ENCODE measurements at regions of chr2 and their contacts with region 1.

Region 1: GRCh38 chr2:72862239-72862988 is 24.8 kb upstream of the SPR start:
- DNase-seq: peak; percentile 77
- ATAC-seq: peak; percentile 89
- H3K4me3 Mint-ChIP-seq: peak overlapping the region; percentile 42
- H3K27ac Mint-ChIP-seq: no peak overlapping the region
- H3K4me1 Mint-ChIP-seq: peaks cover 16% of the 10 kb centered on the region
- H3K27me3 Mint-ChIP-seq: peaks cover 39% of the 10 kb centered on the region
- CTCF ChIP-seq: peak; percentile 87

Region 2: DNA sequence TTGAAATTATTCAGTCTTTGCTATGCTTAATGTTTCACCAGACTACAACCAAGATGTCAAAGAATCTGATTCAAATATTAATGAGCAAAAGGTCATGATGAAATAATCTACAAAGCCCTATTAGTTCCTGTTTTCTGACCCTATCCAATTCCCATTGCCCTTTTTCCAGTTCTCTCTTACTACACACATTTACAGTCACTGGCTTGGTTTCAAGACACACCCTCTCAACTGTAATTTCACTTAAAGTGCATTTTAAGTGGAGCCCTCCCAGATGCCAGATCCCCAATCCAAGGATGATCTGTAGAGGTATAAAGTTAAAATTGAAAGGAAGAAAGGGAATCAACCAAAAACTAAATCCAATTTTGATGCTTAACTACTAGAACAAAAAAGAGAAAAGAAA is 467.7 kb before region 1 on chr2:
- CTCF ChIA-PET with region 1: no interaction called
- POLR2A ChIA-PET with region 1: no interaction called
- intact Hi-C with region 1: no loop called
- DNase-seq: no peak
- ATAC-seq: no peak
- H3K4me3 Mint-ChIP-seq: no peak overlapping the region
- H3K27ac Mint-ChIP-seq: no peak overlapping the region
- H3K4me1 Mint-ChIP-seq: no peaks in the 10 kb centered on the region
- H3K27me3 Mint-ChIP-seq: no peaks in the 10 kb centered on the region
- CTCF ChIP-seq: no peak

Region 3: DNA sequence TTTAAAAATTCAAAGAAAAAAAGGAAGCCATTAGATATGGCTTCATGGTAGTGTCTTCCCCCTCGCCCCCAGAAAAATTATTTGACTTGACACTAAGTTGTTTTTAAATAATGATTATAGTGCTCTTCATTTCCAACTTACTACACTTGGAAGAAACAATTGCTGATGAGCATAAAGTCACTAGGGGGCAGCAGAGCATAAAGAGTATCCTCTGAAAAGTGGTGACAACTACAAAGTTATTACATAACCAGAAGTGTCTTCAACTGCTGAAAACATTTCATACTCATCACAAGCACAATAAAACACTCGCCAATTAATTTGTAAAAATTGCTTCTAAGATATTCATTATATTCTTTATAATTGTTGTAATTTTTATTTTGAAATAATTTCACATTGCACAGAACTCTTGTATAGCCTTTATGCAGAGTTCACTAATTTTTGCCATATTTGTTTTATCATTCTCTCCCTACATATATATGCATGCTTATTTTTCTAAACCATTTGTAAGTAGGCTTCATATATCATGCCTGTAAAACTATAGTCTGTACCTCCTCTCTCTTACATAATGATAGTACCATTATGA is 91.4 kb before region 1 on chr2:
- CTCF ChIA-PET with region 1: interaction called, 17 read pairs
- POLR2A ChIA-PET with region 1: no interaction called
- intact Hi-C with region 1: loop called (anchors 1 kb)
- DNase-seq: no peak
- ATAC-seq: peak; percentile 52
- H3K4me3 Mint-ChIP-seq: no peak overlapping the region
- H3K27ac Mint-ChIP-seq: no peak overlapping the region
- H3K4me1 Mint-ChIP-seq: no peaks in the 10 kb centered on the region
- H3K27me3 Mint-ChIP-seq: no peaks in the 10 kb centered on the region
- CTCF ChIP-seq: peak; percentile 98

Region 4: DNA sequence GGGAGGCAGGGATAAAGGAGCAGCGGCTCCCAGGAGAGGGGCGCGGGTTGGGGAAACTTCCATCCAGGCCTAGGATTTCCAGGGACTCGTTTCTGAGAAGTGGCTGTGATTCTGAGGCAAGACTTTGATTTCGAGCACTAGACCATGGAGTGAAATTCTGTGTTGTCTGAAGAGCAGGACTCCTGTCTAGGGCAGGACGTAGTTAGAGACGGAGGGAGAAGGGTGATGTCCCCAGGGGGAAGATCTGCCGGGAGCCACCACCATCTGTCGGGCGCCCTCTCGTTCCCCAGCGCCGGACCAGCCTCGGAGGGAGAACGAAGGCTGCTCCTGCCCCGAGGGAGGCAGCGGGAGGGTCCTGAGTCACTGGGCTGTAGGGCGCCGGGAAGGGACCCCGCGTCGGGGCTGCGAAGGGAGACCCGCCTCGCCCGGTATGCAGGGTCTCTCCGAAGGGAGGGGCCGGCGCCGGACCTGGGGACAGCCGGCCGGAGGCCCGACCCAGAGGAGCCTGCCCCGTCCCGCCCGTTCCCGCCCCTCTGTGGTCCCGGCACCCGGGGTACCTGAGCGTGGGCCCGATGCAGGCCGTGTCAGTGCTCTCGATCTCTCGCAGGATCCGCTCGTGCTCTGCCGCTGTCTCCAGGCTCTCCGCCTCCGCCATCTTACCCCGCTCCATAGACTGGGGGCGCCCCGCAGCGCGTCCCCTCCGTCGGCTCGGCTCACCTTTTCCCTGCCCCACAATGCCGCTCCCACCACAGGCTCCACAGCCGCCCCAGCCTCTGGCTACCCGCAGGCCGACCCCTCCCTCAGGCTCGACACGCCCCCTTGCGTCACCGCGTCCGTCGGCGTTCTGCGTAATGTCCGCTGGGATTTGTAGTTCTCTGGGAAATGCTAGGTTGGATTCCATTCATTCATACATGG is 36.9 kb before region 1 on chr2 and contains the start of gene EXOC6B:
- CTCF ChIA-PET with region 1: interaction called, 3 read pairs
- POLR2A ChIA-PET with region 1: no interaction called
- intact Hi-C with region 1: loop called (anchors 2 kb)
- DNase-seq: peak; percentile 79
- ATAC-seq: peak; percentile 89
- H3K4me3 Mint-ChIP-seq: peak within 1 kb of the TSS; percentile 97
- H3K27ac Mint-ChIP-seq: peak within 1 kb of the TSS; percentile 68
- H3K4me1 Mint-ChIP-seq: peaks cover 24% of the 10 kb centered on the region
- H3K27me3 Mint-ChIP-seq: peaks cover 12% of the 10 kb centered on the region
- CTCF ChIP-seq: no peak
- total RNA-seq, gene EXOC6B: 13.0 and 13.8 TPM in 2 replicates

Region 5: DNA sequence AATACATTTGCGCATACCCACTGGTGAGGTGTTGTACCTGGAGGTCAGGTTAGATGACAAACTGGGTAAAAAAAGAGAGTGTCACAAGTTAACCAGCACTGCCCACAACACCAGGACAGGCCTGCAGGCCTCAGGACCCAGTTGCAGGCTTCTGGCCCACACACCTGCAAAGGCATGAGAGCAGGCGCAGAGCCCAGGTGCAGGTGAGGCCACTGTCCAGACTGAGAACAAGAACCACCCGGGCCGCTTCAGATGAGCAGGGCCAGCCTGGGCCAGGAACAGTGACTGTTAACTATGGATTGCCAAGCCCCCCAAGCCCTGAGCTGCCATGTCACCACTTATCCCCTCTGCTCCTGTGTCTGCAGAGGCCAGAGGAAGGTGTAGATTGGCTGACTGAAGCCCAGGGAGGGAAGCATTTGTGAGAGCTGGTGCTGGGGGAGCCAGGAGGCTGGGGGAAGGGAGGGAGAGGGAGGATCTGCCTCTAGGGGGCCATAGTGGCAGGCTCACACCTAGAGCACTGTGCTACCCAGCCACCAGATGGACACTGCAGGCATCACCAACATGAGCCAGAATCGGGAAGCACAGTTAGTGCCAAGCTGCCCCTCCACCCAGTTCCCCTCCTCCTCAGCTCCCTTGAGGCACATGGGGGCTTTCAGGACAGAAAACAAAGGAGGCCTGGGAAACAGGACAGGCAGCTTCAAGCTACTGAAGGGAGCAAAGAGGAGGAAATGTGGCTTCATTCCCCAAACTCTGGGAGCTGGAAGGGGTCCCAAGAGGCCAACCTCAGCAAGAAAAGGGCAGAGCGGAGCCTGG is 173.7 kb after region 1 on chr2:
- CTCF ChIA-PET with region 1: no interaction called
- POLR2A ChIA-PET with region 1: no interaction called
- intact Hi-C with region 1: no loop called
- DNase-seq: no peak
- ATAC-seq: no peak
- H3K4me3 Mint-ChIP-seq: no peak overlapping the region
- H3K27ac Mint-ChIP-seq: no peak overlapping the region
- H3K4me1 Mint-ChIP-seq: peaks cover 2% of the 10 kb centered on the region
- H3K27me3 Mint-ChIP-seq: no peaks in the 10 kb centered on the region
- CTCF ChIP-seq: no peak

Region 6: GRCh38 chr2:73156539-73157124 is 294.2 kb after region 1 on chr2:
- CTCF ChIA-PET with region 1: no interaction called
- POLR2A ChIA-PET with region 1: no interaction called
- intact Hi-C with region 1: no loop called
- DNase-seq: no peak
- ATAC-seq: no peak
- H3K4me3 Mint-ChIP-seq: no peak overlapping the region
- H3K27ac Mint-ChIP-seq: no peak overlapping the region
- H3K4me1 Mint-ChIP-seq: no peaks in the 10 kb centered on the region
- H3K27me3 Mint-ChIP-seq: peaks cover 36% of the 10 kb centered on the region
- CTCF ChIP-seq: no peak